OCI-LY7 (cell line): ENCODE measurements at regions of chrX and their contacts with region 1.

Region 1: GRCh38 chrX:13646154-13646549 is 6.8 kb upstream of the TCEANC start:
- DNase-seq: peak; percentile 28
- H3K4me3 ChIP-seq: no peak overlapping the region
- H3K27ac ChIP-seq: no peak overlapping the region
- H3K4me1 ChIP-seq: no peaks in the 10 kb centered on the region
- CTCF ChIP-seq: peak; percentile 66

Region 2: GRCh38 chrX:13506574-13506973 is 139.6 kb before region 1 on chrX:
- CTCF ChIA-PET with region 1: no interaction called
- POLR2A ChIA-PET with region 1: no interaction called
- intact Hi-C with region 1: loop called (anchors 5 kb)
- DNase-seq: peak; percentile 51
- H3K4me3 ChIP-seq: no peak overlapping the region
- H3K27ac ChIP-seq: no peak overlapping the region
- H3K4me1 ChIP-seq: no peaks in the 10 kb centered on the region
- CTCF ChIP-seq: peak; percentile 80